OCI-LY7 (cell line): ENCODE measurements at regions of chr1 and their contacts with region 1.

Region 1: DNA sequence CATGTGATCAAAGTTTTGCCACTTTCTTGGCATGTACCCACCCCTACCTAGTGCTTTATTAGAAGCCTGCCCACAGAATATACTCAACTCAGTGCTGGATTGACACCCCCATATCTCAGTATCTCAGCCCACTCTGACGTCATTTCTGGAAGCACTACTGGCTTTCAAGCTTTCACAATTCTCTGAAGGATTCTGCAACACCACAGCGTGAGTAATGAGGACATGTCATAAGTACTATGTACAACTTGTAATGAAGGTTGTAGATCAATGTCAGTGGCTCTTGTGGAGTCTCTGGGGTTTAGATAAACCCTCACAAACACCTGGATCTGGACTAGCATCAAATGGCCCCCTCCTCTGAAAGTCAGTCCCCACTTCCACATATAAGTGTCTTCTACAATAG is 57.2 kb downstream of the TNFSF4 start:
- DNase-seq: no peak
- H3K4me3 ChIP-seq: no peak overlapping the region
- H3K27ac ChIP-seq: no peak overlapping the region
- H3K4me1 ChIP-seq: no peaks in the 10 kb centered on the region
- CTCF ChIP-seq: no peak

Region 2: GRCh38 chr1:173181791-173182190 is 31.9 kb after region 1 on chr1:
- CTCF ChIA-PET with region 1: no interaction called
- POLR2A ChIA-PET with region 1: no interaction called
- intact Hi-C with region 1: loop called (anchors 2 kb)
- DNase-seq: no peak
- H3K4me3 ChIP-seq: no peak overlapping the region
- H3K27ac ChIP-seq: no peak overlapping the region
- H3K4me1 ChIP-seq: no peaks in the 10 kb centered on the region
- CTCF ChIP-seq: no peak